ENCODE measurements at regions of chr11 and their contacts with region 1.

Region 1: DNA sequence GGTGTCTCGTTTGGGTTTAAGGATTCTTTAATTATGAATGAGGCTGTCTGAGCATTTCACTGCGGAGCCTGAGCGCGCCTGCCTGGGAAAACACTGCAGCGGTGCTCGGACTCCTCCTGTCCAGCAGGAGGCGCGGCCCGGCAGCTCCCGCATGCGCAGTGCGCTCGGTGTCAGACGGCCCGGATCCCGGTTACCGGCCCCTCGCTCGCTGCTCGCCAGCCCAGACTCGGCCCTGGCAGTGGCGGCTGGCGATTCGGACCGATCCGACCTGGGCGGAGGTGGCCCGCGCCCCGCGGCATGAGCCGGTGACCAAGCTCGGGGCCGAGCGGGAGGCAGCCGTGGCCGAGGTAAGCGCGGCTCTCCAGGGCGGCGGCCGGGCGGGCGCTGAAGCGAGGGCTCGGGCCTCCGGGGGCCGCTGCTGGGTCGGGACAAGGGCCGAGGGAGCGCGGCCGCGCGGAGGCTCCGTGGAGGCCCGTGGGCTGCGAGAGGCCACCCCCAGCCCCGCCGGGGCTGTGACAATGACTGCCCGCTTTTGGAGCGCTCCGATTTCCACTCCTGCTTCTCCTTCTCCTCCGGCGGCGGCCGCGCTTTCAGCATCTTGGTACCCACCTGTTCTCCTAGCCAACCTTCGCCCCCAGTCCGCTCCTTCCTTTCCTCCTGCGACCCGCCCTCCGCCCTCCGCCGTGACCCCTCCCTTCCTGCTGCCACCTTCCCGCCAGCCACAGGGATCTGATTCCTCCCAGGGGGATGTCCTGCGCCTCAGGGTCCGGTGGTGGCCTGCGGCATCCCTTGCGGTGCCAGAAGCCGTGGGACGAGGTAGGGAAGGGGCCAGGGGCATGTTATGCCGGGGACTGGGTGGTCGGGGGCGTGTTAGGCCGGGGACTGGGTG is at the start of gene EXT2:
- DNase-seq: peak; percentile 96
- H3K4me3 Mint-ChIP-seq: peak within 1 kb of the TSS; percentile 88
- H3K27ac Mint-ChIP-seq: peak within 1 kb of the TSS; percentile 51
- H3K4me1 Mint-ChIP-seq: peaks cover 19% of the 10 kb centered on the region
- H3K27me3 Mint-ChIP-seq: no peaks in the 10 kb centered on the region
- total RNA-seq, gene EXT2: 31.0 and 35.1 TPM in 2 replicates

Region 2: GRCh38 chr11:43880640-43881159 is 215.1 kb before region 1 on chr11 and contains the start of gene ALKBH3:
- intact Hi-C with region 1: loop called (anchors 10 kb)
- DNase-seq: peak; percentile 97
- H3K4me3 Mint-ChIP-seq: peak within 1 kb of the TSS; percentile 93
- H3K27ac Mint-ChIP-seq: peak within 1 kb of the TSS; percentile 90
- H3K4me1 Mint-ChIP-seq: peaks cover 14% of the 10 kb centered on the region
- H3K27me3 Mint-ChIP-seq: peaks cover 12% of the 10 kb centered on the region
- total RNA-seq, gene ALKBH3: 38.3 and 41.4 TPM in 2 replicates

Region 3: GRCh38 chr11:44065841-44066731 is 29.7 kb before region 1 on chr11 and contains the start of gene ACCS:
- intact Hi-C with region 1: loop called (anchors 1 kb)
- DNase-seq: peak; percentile 97
- H3K4me3 Mint-ChIP-seq: peak within 1 kb of the TSS; percentile 92
- H3K27ac Mint-ChIP-seq: peak within 1 kb of the TSS; percentile 95
- H3K4me1 Mint-ChIP-seq: peaks cover 25% of the 10 kb centered on the region
- H3K27me3 Mint-ChIP-seq: peaks cover 2% of the 10 kb centered on the region
- total RNA-seq, gene ACCS: 19.7 and 21.7 TPM in 2 replicates

Region 4: DNA sequence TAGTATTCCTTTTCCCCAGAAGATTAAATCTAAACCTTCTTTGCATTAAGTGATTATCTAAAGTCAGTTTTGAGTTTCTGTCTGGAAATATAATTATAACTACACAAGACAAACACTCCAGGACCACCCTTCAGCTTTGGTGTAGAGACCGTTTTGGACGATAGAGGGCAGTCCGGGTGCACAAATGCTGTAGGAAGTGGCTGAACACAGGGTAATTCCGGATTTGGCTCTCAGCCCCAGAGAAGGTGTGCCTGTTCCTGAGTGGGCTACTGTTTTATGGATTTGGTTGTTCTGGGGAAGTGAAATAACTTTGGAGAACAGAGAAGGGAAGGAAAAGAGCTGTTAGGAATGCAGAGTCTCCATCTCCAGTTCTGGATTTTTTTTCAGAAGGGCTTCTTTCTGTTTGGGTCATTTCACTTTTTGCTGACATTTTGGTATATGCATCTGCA is 14.5 kb after region 1 on chr11:
- intact Hi-C with region 1: loop called (anchors 1 kb)
- DNase-seq: peak; percentile 87
- H3K4me3 Mint-ChIP-seq: no peak overlapping the region
- H3K27ac Mint-ChIP-seq: peak overlapping the region; percentile 39
- H3K4me1 Mint-ChIP-seq: peaks cover 11% of the 10 kb centered on the region
- H3K27me3 Mint-ChIP-seq: no peaks in the 10 kb centered on the region

Region 5: DNA sequence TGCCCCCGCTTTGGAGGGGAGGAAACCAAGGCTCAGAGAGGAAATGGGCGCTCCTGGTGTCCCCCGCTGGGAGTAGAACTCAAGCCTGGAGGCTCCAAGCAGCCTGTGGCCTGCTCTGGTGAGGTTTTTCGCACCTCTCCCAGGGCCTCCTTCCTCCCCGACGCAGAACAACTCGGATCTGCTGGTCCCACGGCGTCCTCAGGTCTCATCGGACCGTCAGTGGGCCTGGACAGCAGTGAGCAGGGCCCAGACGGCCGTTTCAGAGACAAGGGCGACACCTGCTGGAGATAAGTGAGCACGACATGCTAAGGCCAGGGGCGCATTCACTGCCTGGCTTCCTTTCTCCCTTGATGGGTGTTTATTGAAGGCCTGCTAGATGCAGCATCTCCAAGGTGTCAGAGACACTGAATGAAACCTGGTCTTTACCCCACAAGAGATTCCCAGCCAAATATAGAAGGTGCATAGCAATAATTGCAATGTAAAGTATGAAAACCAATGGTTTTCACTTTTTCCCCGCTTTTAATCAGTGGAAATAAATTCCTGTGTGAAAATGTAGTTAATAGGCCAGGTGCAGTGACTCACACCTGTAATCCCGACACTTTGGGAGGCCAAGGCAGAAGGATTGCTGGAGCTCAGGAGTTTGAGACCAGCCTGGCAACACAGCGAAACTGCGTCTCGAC is 442.8 kb after region 1 on chr11:
- intact Hi-C with region 1: loop called (anchors 1 kb)
- DNase-seq: peak; percentile 93
- H3K4me3 Mint-ChIP-seq: no peak overlapping the region
- H3K27ac Mint-ChIP-seq: no peak overlapping the region
- H3K4me1 Mint-ChIP-seq: peaks cover 4% of the 10 kb centered on the region
- H3K27me3 Mint-ChIP-seq: peaks cover 1% of the 10 kb centered on the region

Measured in activated CD4-positive, alpha-beta T cell treated with anti-CD3 and anti-CD28 coated beads, Interleukin-2, amount 10 ng/mL, durations not matched to agents 24 days and 14 days (primary cell).